ENCODE measurements at regions of chr12 and their contacts with region 1.

Region 1: GRCh38 chr12:82952946-82953345 is 266.2 kb downstream of the TMTC2 start:
- DNase-seq: no peak
- H3K4me3 Mint-ChIP-seq: no peak overlapping the region
- H3K27ac Mint-ChIP-seq: no peak overlapping the region
- H3K4me1 Mint-ChIP-seq: no peaks in the 10 kb centered on the region
- H3K27me3 Mint-ChIP-seq: no peaks in the 10 kb centered on the region
- CTCF ChIP-seq: no peak

Region 2: DNA sequence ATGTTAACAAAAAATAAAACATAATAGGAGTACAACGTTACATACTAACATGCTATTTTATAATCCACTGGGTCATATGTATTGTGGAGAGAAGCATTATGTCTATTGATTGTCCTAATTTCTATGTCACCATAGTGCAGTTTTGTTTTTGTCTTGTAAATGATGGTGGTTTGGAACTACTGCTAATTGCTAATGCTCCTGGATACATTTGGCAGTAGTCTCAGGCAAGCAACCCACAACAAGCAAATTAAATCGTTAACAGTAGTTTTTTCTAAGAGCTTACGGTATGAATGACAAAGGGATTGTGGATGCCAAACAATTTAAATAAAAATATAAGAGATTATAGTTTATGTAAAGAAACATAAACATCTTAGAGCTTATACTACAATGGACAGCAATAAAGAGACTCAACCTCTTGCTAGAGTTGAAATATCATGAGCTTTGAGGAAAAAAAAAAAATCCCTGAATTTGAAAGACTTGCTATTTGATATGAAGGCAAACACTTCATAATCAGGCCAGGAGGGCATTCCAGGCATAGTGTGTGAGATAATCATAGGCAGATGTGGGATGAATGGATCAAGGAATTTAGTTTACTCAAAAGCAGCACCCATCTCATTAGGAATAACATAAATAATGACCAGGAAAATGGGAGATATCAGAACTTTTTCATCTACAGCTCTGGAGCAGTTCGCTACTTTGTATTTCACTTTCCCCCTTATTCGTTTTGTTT is 776.0 kb before region 1 on chr12:
- CTCF ChIA-PET with region 1: no interaction called
- POLR2A ChIA-PET with region 1: no interaction called
- intact Hi-C with region 1: no loop called
- DNase-seq: no peak
- H3K4me3 Mint-ChIP-seq: no peak overlapping the region
- H3K27ac Mint-ChIP-seq: no peak overlapping the region
- H3K4me1 Mint-ChIP-seq: peaks cover 30% of the 10 kb centered on the region
- H3K27me3 Mint-ChIP-seq: no peaks in the 10 kb centered on the region
- CTCF ChIP-seq: no peak

Region 3: GRCh38 chr12:82974657-82975056 is 21.7 kb after region 1 on chr12:
- CTCF ChIA-PET with region 1: no interaction called
- POLR2A ChIA-PET with region 1: no interaction called
- intact Hi-C with region 1: loop called (anchors 1 kb)
- DNase-seq: no peak
- H3K4me3 Mint-ChIP-seq: no peak overlapping the region
- H3K27ac Mint-ChIP-seq: no peak overlapping the region
- H3K4me1 Mint-ChIP-seq: no peaks in the 10 kb centered on the region
- H3K27me3 Mint-ChIP-seq: no peaks in the 10 kb centered on the region
- CTCF ChIP-seq: no peak

Region 4: GRCh38 chr12:83629931-83630330 is 677.0 kb after region 1 on chr12:
- CTCF ChIA-PET with region 1: no interaction called
- POLR2A ChIA-PET with region 1: no interaction called
- intact Hi-C with region 1: no loop called
- DNase-seq: no peak
- H3K4me3 Mint-ChIP-seq: no peak overlapping the region
- H3K27ac Mint-ChIP-seq: no peak overlapping the region
- H3K4me1 Mint-ChIP-seq: no peaks in the 10 kb centered on the region
- H3K27me3 Mint-ChIP-seq: no peaks in the 10 kb centered on the region
- CTCF ChIP-seq: no peak